ENCODE measurements at regions of chr3 and their contacts with region 1.

Region 1: GRCh38 chr3:15291589-15292541 is 40.5 kb downstream of the SH3BP5 start:
- DNase-seq: peak in 2 of 4 experiments; percentile 41 to 44
- ATAC-seq: peak; percentile 44
- H3K4me3 ChIP-seq: no peak overlapping the region
- H3K27ac ChIP-seq: no peak overlapping the region
- H3K4me1 ChIP-seq: peaks cover 22 to 53% of the 10 kb centered on the region in 2 experiments
- H3K27me3 ChIP-seq: no peaks in the 10 kb centered on the region
- CTCF ChIP-seq: no peak
- EP300 ChIP-seq: no peak
- POLR2A ChIP-seq: no peak
- RAD21 ChIP-seq: no peak

Region 2: DNA sequence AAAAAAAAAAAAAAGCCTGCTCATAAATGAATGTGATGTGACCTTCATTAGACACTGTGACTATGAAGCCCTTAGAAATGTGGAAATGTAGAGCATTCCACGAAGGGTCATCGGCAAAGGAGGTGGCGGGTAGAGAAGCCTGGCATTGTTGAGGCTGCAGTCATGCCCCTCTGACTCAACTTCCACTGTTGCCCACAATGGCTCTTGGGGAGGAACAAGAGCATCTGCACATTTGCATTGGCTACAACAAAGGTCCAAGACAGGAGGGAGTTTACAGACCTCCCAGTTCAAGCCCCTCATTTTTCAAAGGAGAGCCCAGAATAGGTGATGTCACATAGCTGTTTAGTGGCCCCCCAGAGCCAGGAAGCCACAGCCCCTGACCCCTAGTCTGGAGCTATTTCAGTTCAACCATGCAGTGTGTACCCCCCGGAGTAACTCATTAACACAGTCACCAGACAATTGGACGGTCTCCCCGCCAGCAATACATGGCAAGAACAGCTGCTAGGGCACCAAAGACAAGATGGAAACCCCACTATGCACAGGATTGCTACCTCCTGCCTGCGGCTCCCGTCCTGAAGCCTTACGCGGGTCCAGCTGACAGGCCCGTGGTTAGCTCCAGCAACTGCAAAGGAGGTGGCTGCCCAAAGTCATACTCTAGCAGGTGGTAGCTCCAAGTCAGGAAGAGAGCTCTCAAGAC is 15.7 kb before region 1 on chr3:
- CTCF ChIA-PET with region 1: no interaction called
- POLR2A ChIA-PET with region 1: interaction called, 15 read pairs
- in situ Hi-C with region 1: no loop called
- intact Hi-C with region 1: no loop called
- DNase-seq: no peak
- ATAC-seq: no peak
- H3K4me3 ChIP-seq: no peak overlapping the region
- H3K27ac ChIP-seq: no peak overlapping the region
- H3K4me1 ChIP-seq: peaks cover 18 to 20% of the 10 kb centered on the region in 2 experiments
- H3K27me3 ChIP-seq: no peaks in the 10 kb centered on the region
- CTCF ChIP-seq: no peak
- EP300 ChIP-seq: no peak
- POLR2A ChIP-seq: no peak
- RAD21 ChIP-seq: no peak